CD4-positive, alpha-beta T cell (primary cell): ENCODE measurements at regions of chr2 and their contacts with region 1.

Region 1: DNA sequence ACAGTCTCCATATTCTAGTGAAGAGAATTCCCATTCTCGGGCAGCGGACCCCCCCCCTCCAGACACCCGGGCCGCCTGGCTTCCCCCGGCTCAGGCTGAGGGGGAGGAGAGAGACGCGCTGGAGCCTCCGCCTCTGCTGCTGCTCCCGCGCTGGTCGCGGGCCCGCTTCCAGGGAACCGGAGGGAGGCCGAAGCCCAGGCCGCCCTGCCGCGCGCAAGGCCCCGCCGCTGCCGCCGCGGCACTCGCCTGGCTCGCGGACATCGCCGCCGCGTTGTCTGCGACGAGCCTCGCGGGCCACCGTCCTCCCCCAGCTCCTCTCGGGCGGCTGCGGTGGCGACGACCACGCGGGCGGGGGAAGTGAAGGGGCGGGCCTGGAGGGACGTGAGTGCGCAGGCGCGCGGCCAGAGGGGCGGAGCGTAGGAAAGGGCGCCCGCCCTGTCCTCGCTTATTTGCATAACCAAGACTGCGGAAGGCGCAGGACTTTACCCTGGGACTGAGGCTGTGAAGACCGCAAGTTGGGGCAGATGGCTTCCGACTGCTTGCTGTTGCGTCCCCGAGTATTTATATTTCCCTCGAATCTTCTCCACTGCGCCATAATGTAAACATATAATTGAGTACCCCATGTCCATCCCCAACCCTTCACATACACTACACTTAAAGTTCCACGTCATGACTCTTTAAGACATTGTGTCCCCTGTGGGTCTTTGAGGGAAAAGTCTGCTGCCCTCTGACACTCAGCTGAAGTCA is at the start of gene ARL5A:
- DNase-seq: peak; percentile 89 to 98 (median 95)
- ATAC-seq: peak; percentile 94
- H3K4me3 ChIP-seq: peak within 1 kb of the TSS; percentile 91
- H3K4me3 Mint-ChIP-seq: peak within 1 kb of the TSS; percentile 93
- H3K27ac ChIP-seq: peak within 1 kb of the TSS; percentile 51 to 52
- H3K27ac Mint-ChIP-seq: peak within 1 kb of the TSS; percentile 95
- H3K4me1 ChIP-seq: peaks cover 18% of the 10 kb centered on the region
- H3K4me1 Mint-ChIP-seq: peaks cover 50% of the 10 kb centered on the region
- H3K27me3 ChIP-seq: no peaks in the 10 kb centered on the region
- H3K27me3 Mint-ChIP-seq: no peaks in the 10 kb centered on the region
- CTCF ChIP-seq: no peak
- total RNA-seq, gene ARL5A: 16.9 to 20.5 TPM

Region 2: GRCh38 chr2:151261231-151261976 is 566.9 kb before region 1 on chr2 and contains the start of gene RBM43:
- CTCF ChIA-PET with region 1: no interaction called
- POLR2A ChIA-PET with region 1: no interaction called
- intact Hi-C with region 1: loop called in 1 of 2 experiments (anchors 10 kb)
- DNase-seq: peak; percentile 64 to 94 (median 78)
- ATAC-seq: peak; percentile 88
- H3K4me3 ChIP-seq: peak within 1 kb of the TSS; percentile 96
- H3K4me3 Mint-ChIP-seq: peak within 1 kb of the TSS; percentile 97
- H3K27ac ChIP-seq: peak within 1 kb of the TSS; percentile 96 to 98
- H3K27ac Mint-ChIP-seq: peak within 1 kb of the TSS; percentile 96
- H3K4me1 ChIP-seq: peaks cover 22% of the 10 kb centered on the region
- H3K4me1 Mint-ChIP-seq: peaks cover 39% of the 10 kb centered on the region
- H3K27me3 ChIP-seq: no peaks in the 10 kb centered on the region
- H3K27me3 Mint-ChIP-seq: no peaks in the 10 kb centered on the region
- CTCF ChIP-seq: no peak
- total RNA-seq, gene RBM43: 15.0 to 16.0 TPM

Region 3: GRCh38 chr2:151289369-151290088 is 538.8 kb before region 1 on chr2 and contains the start of gene NMI:
- CTCF ChIA-PET with region 1: no interaction called
- POLR2A ChIA-PET with region 1: interaction called, 6 read pairs
- intact Hi-C with region 1: loop called in 1 of 2 experiments (anchors 10 kb)
- DNase-seq: peak; percentile 42 to 89 (median 61)
- ATAC-seq: peak; percentile 71
- H3K4me3 ChIP-seq: peak within 1 kb of the TSS; percentile 82
- H3K4me3 Mint-ChIP-seq: peak within 1 kb of the TSS; percentile 94
- H3K27ac ChIP-seq: peak within 1 kb of the TSS; percentile 82 to 97
- H3K27ac Mint-ChIP-seq: peak within 1 kb of the TSS; percentile 96
- H3K4me1 ChIP-seq: peaks cover 23% of the 10 kb centered on the region
- H3K4me1 Mint-ChIP-seq: peaks cover 56% of the 10 kb centered on the region
- H3K27me3 ChIP-seq: no peaks in the 10 kb centered on the region
- H3K27me3 Mint-ChIP-seq: no peaks in the 10 kb centered on the region
- CTCF ChIP-seq: no peak
- total RNA-seq, gene NMI: 23.5 to 24.2 TPM

Region 4: DNA sequence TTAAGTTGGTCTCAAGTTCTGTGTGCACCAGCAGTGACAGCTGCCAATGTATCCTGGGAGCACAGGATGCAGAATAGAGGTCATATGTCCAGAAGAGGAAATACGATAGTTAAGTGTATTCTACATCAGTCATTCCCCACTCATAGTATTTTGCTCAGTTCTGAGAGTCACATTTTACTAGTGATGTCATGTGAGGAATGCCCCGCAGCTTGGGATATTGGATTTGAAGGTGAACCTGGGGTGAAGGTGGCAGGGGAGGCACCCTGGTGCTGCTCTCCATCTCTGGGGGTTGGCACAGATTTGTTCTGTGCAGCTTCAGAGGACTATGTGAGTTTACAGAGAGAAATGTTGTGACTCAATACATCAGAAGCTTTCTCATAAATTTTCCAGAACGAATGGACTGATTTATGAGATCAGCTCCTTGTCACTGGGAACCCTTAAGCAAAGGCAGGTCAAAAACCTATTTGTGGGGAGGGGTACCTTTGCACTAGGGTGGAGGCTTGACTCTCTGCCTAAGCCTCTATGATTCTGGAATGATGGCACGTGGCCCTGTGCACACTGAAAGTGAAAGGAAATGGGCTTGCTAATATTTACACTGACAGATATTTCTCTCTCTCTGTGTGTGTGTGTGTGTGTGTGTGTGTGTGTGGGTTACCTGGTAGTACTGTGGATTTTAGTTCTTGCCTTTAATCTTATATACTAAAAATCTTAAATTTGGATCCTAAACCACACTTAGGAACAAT is 190.0 kb before region 1 on chr2:
- CTCF ChIA-PET with region 1: no interaction called
- POLR2A ChIA-PET with region 1: interaction called, 16 read pairs
- intact Hi-C with region 1: loop called in 1 of 2 experiments (anchors 5 kb)
- DNase-seq: peak in 10 of 14 experiments; percentile 4 to 83 (median 34)
- ATAC-seq: peak; percentile 44
- H3K4me3 ChIP-seq: no peak overlapping the region
- H3K4me3 Mint-ChIP-seq: peak overlapping the region; percentile 66
- H3K27ac ChIP-seq: peak overlapping the region; percentile 72 to 78
- H3K27ac Mint-ChIP-seq: peak overlapping the region; percentile 88
- H3K4me1 ChIP-seq: peaks cover 30% of the 10 kb centered on the region
- H3K4me1 Mint-ChIP-seq: peaks cover 56% of the 10 kb centered on the region
- H3K27me3 ChIP-seq: no peaks in the 10 kb centered on the region
- H3K27me3 Mint-ChIP-seq: no peaks in the 10 kb centered on the region
- CTCF ChIP-seq: no peak

Region 5: DNA sequence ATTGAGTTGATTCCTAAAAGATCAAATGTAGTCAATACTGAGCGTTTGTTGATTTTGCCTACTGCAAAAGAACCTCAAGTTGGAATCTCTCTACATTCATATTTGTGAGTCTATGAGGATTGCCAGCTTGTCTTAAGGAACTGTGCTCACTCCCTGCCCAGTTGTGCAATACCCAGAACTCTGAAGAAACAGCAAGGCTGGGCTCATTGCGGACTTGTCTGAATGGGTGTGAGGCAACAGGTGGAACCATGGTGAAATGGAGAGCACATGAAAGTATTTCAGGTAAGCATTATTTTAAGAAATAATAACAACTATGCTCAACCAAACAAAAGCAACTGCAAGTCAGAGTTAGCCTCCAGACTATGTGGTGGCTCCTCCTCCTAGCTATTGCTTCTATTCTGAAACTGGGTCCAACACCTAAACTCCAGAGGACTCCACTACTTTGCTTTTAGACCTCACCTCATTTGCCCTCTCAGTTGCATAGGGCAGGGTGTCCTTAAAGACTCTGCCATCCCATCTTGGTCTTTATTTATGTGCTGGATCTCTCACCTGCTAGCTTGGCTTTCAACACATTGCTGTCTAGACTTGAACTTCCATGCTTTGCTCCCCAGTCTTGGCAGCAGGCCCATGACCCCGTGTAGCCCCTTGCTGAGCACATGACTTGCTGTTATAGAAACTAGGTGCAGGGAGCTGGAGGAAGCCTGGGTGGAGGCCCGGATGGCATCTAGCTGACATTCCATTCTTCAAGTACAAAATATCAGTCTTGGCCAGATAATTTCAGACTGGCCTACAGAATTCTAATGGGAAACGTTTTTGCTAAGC is 94.7 kb after region 1 on chr2:
- CTCF ChIA-PET with region 1: no interaction called
- POLR2A ChIA-PET with region 1: no interaction called
- intact Hi-C with region 1: no loop called
- DNase-seq: peak in 3 of 14 experiments; percentile 9 to 45 (median 33)
- ATAC-seq: no peak
- H3K4me3 ChIP-seq: no peak overlapping the region
- H3K4me3 Mint-ChIP-seq: no peak overlapping the region
- H3K27ac ChIP-seq: no peak overlapping the region
- H3K27ac Mint-ChIP-seq: no peak overlapping the region
- H3K4me1 ChIP-seq: peaks cover 3% of the 10 kb centered on the region
- H3K4me1 Mint-ChIP-seq: no peaks in the 10 kb centered on the region
- H3K27me3 ChIP-seq: peaks cover under 1 to 2% of the 10 kb centered on the region in 2 experiments
- H3K27me3 Mint-ChIP-seq: peaks cover 6% of the 10 kb centered on the region
- CTCF ChIP-seq: no peak